ENCODE measurements at regions of chr13 and their contacts with region 1.

Region 1: GRCh38 chr13:48233046-48233907 is at the start of gene ITM2B:
- DNase-seq: peak; percentile 76
- H3K4me3 ChIP-seq: peak within 1 kb of the TSS; percentile 67 to 95 (median 77)
- H3K27ac ChIP-seq: peak within 1 kb of the TSS; percentile 86
- H3K4me1 ChIP-seq: peaks cover 45% of the 10 kb centered on the region
- H3K27me3 ChIP-seq: peaks cover 2 to 4% of the 10 kb centered on the region in 2 experiments
- CTCF ChIP-seq: peak; percentile 34 to 36
- POLR2A ChIP-seq: peak; percentile 55
- total RNA-seq, gene ITM2B: 245 and 271 TPM in 2 replicates

Region 2: GRCh38 chr13:48000778-48001628 is 232.3 kb before region 1 on chr13 and contains the start of gene SUCLA2:
- CTCF ChIA-PET with region 1: no interaction called
- POLR2A ChIA-PET with region 1: no interaction called
- dilution Hi-C with region 1: no loop called
- intact Hi-C with region 1: loop called (anchors 5 kb)
- DNase-seq: peak; percentile 87
- H3K4me3 ChIP-seq: peak within 1 kb of the TSS; percentile 88 to 93 (median 92)
- H3K27ac ChIP-seq: peak within 1 kb of the TSS; percentile 62
- H3K4me1 ChIP-seq: peaks cover 15% of the 10 kb centered on the region
- H3K27me3 ChIP-seq: no peaks in the 10 kb centered on the region
- CTCF ChIP-seq: no peak
- POLR2A ChIP-seq: peak; percentile 92
- total RNA-seq, gene SUCLA2: 32.0 and 37.0 TPM in 2 replicates

Region 3: GRCh38 chr13:48094781-48095502 is 138.3 kb before region 1 on chr13 and contains the start of gene MED4:
- CTCF ChIA-PET with region 1: interaction called, 13 read pairs
- POLR2A ChIA-PET with region 1: interaction called, 3 read pairs
- dilution Hi-C with region 1: no loop called
- intact Hi-C with region 1: loop called (anchors 1 kb)
- DNase-seq: peak; percentile 95
- H3K4me3 ChIP-seq: peak within 1 kb of the TSS; percentile 84 to 95 (median 86)
- H3K27ac ChIP-seq: peak within 1 kb of the TSS; percentile 60
- H3K4me1 ChIP-seq: peaks cover 10% of the 10 kb centered on the region
- H3K27me3 ChIP-seq: peaks cover 5% of the 10 kb centered on the region in 2 experiments
- CTCF ChIP-seq: peak; percentile 100
- POLR2A ChIP-seq: peak; percentile 91
- total RNA-seq, gene MED4: 40.1 and 43.3 TPM in 2 replicates

Region 4: GRCh38 chr13:48126944-48127830 is 106.1 kb before region 1 on chr13:
- CTCF ChIA-PET with region 1: interaction called, 17 read pairs
- POLR2A ChIA-PET with region 1: no interaction called
- dilution Hi-C with region 1: no loop called
- intact Hi-C with region 1: loop called (anchors 5 kb)
- DNase-seq: peak; percentile 66
- H3K4me3 ChIP-seq: no peak overlapping the region
- H3K27ac ChIP-seq: no peak overlapping the region
- H3K4me1 ChIP-seq: peaks cover 15% of the 10 kb centered on the region
- H3K27me3 ChIP-seq: peaks cover 0 to under 1% of the 10 kb centered on the region in 2 experiments
- CTCF ChIP-seq: peak; percentile 58 to 62
- POLR2A ChIP-seq: no peak

Region 5: DNA sequence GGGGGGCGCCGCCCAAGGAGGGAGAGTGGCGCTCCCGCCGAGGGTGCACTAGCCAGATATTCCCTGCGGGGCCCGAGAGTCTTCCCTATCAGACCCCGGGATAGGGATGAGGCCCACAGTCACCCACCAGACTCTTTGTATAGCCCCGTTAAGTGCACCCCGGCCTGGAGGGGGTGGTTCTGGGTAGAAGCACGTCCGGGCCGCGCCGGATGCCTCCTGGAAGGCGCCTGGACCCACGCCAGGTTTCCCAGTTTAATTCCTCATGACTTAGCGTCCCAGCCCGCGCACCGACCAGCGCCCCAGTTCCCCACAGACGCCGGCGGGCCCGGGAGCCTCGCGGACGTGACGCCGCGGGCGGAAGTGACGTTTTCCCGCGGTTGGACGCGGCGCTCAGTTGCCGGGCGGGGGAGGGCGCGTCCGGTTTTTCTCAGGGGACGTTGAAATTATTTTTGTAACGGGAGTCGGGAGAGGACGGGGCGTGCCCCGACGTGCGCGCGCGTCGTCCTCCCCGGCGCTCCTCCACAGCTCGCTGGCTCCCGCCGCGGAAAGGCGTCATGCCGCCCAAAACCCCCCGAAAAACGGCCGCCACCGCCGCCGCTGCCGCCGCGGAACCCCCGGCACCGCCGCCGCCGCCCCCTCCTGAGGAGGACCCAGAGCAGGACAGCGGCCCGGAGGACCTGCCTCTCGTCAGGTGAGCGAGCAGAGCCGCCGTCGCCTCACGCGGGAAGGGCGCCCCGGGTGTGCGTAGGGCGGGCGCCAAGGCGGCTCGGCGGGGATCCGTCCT is 70.3 kb after region 1 on chr13 and contains the start of gene RB1:
- CTCF ChIA-PET with region 1: no interaction called
- POLR2A ChIA-PET with region 1: no interaction called
- dilution Hi-C with region 1: no loop called
- intact Hi-C with region 1: loop called (anchors 1 kb)
- DNase-seq: peak; percentile 92
- H3K4me3 ChIP-seq: peak within 1 kb of the TSS; percentile 94 to 98 (median 97)
- H3K27ac ChIP-seq: peak within 1 kb of the TSS; percentile 94
- H3K4me1 ChIP-seq: peaks cover 21% of the 10 kb centered on the region
- H3K27me3 ChIP-seq: no peaks in the 10 kb centered on the region
- CTCF ChIP-seq: no peak
- POLR2A ChIP-seq: no peak
- total RNA-seq, gene RB1: 34.8 and 41.2 TPM in 2 replicates

Measured in endothelial cell of umbilical vein (primary cell).